ENCODE measurements at regions of chr9 and their contacts with region 1.

Region 1: DNA sequence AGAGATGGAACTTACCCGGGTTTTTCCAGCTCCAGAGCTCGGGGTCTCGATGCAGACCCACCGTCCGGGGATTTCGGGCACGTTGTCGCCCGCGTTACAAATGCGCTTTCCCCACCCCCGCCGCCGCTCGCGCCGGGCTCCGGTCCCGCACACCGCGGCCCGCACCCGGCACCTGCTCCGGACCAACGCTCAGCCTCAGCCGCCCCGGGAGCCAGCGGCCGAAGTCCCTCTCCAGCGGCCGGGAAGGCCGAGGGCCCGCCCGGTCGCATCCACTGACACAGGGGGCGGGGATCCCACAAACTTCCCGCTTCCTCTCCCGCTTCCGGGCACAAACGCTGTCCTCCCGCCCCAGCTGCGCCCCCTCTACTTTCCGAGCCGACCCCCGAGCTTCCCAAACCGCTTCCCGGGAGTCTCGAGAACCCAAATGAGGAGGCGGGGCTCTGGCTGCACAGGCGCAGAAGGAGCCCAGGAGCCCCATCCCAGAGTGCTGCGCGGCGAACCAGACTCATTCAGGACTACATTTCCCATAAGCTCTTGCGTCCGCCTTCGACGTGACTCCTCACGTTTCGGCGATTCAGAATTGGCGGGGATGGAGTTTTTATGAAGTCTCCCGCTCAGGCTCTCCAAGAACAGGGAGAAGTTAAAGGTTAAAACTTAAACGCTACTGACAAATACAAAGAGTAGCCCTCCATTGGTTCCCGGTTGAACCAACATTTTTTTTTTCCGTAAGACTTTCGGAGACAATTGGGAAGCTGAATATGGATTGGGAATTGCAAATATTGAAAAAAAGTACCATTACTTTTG is at the start of gene ZNF782:
- DNase-seq: peak; percentile 90 to 95 (median 94)
- ATAC-seq: peak; percentile 92
- H3K4me3 ChIP-seq: peak within 1 kb of the TSS; percentile 70
- H3K27ac ChIP-seq: peak within 1 kb of the TSS; percentile 49
- H3K4me1 ChIP-seq: peaks cover 15 to 33% of the 10 kb centered on the region in 2 experiments
- H3K27me3 ChIP-seq: no peaks in the 10 kb centered on the region
- CTCF ChIP-seq: no peak
- EP300 ChIP-seq: no peak
- POLR2A ChIP-seq: peak; percentile 77
- RAD21 ChIP-seq: peak in 1 of 2 experiments; percentile 9; a peak in 1 of 4 replicates
- polyA plus RNA-seq, gene ZNF782: 0.38 to 0.55 TPM

Region 2: DNA sequence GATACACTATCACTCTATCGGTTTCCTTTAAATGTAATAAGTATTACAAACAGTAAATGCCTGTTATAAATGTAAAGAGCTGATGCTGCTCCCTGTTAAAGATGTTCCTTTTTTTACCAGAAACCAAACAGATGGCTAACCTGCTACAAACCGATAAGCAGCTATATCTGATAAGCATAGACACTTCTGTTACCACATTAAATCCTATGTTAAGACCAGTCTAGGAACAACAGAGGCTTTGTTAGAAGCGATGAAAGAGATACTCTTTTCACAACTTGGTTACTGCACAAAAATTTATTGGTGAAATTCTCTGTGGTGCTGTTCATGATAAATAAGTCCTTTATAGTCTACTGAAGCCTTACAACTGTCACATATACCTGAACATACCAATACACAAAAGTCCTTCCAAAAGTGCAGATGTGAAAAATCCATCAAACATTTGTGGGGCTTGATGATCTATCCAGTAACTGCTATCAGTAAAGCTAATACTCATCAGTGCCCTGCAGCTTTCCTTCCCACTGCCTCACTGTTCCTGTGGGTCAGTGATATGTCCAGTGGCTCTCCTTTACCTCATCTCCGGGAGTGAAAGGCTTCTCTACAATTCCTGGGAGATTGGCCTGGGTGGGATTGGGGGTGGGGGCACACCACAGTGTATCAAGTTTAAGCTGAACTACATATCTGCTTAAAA is 173.3 kb before region 1 on chr9:
- CTCF ChIA-PET with region 1: no interaction called
- POLR2A ChIA-PET with region 1: no interaction called
- in situ Hi-C with region 1: no loop called
- intact Hi-C with region 1: loop called (anchors 5 kb)
- DNase-seq: peak; percentile 41 to 63 (median 50)
- ATAC-seq: peak; percentile 81
- H3K4me3 ChIP-seq: no peak overlapping the region
- H3K27ac ChIP-seq: peak overlapping the region; percentile 27
- H3K4me1 ChIP-seq: peaks cover 11 to 30% of the 10 kb centered on the region in 2 experiments
- H3K27me3 ChIP-seq: no peaks in the 10 kb centered on the region
- CTCF ChIP-seq: no peak
- EP300 ChIP-seq: peak; percentile 91
- POLR2A ChIP-seq: no peak
- RAD21 ChIP-seq: no peak; a peak in 1 of 4 replicates

Region 3: DNA sequence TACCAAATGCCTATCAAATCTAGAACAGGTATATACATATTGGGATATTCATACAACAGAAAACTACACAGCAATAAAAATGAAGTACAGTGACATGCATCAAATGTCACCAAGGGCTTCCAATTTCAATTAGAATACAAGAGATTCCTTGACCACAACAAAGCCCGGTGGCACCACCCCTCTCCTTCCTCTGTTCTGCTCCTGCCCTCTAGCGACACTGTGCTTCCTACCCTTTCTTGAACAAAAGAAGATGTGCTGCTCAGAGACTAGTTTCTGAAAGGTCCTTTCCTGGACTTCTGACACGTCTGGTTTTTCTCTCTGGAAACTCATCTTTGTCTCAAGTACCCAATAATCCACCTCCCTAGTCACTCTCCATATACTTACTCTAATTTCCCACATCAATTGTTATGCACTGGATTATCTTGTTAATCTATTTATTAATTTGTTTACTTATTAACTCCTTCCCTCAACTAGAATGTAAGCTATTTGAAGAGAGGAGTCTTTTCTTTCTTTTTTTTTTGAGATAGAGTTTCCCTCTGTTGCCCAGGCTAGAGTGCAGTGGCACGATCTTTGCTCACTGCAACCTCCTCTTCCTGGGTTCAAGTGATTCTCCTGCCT is 255.0 kb after region 1 on chr9:
- CTCF ChIA-PET with region 1: interaction called, 10 read pairs
- POLR2A ChIA-PET with region 1: no interaction called
- in situ Hi-C with region 1: no loop called
- intact Hi-C with region 1: loop called (anchors 1 kb)
- DNase-seq: peak; percentile 7 to 70 (median 23)
- ATAC-seq: peak; percentile 96
- H3K4me3 ChIP-seq: no peak overlapping the region
- H3K27ac ChIP-seq: no peak overlapping the region
- H3K4me1 ChIP-seq: no peaks in the 10 kb centered on the region
- H3K27me3 ChIP-seq: peaks cover 2 to 17% of the 10 kb centered on the region in 2 experiments; a peak in 2 of 5 replicates
- CTCF ChIP-seq: peak; percentile 69 to 86 (median 74)
- EP300 ChIP-seq: no peak
- POLR2A ChIP-seq: no peak
- RAD21 ChIP-seq: peak; percentile 85 to 92

Region 4: DNA sequence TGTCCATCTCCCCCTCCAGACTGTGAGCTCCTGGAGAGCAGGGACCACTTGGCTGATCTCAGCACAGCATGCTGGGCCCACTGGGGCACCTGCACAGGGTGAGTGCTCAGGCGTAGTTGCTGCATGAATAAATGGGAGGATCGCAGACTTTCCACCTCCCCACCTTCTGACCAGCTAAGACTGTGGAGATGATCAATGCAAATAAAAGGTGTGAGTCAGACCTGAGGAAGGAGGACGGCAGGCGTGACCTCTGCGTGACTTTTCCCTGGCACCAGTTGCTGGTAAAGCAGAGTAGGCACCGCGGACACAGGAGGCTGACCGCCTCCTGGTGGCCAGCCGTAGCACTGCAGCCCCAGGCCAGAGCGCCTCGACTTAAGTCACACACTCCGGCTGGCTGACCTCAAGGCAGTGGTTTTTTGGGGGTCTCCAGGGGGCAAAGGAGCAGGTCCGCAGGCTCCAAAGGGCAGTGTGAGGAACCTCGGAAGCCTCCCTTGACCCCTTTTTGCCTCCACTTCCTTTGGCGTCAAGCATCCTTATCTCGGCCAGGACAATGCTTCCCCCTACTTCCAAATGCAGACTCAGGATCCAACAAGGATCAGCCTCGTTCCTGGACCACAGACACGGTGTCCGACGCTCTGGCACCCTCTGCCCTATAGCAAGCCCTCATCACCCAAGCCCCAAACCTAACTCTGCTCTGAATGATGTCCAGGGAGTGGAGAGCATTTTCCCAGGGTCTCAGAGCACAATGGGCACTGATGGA is 544.9 kb after region 1 on chr9:
- CTCF ChIA-PET with region 1: interaction called, 11 read pairs
- POLR2A ChIA-PET with region 1: interaction called, 4 read pairs
- in situ Hi-C with region 1: no loop called
- intact Hi-C with region 1: loop called (anchors 5 kb)
- DNase-seq: peak; percentile 72 to 78 (median 76)
- ATAC-seq: peak; percentile 95
- H3K4me3 ChIP-seq: no peak overlapping the region
- H3K27ac ChIP-seq: no peak overlapping the region
- H3K4me1 ChIP-seq: no peaks in the 10 kb centered on the region
- H3K27me3 ChIP-seq: peaks cover 8 to 13% of the 10 kb centered on the region in 2 experiments
- CTCF ChIP-seq: peak; percentile 85 to 95 (median 87)
- EP300 ChIP-seq: no peak
- POLR2A ChIP-seq: no peak
- RAD21 ChIP-seq: peak; percentile 37 to 82

Region 5: DNA sequence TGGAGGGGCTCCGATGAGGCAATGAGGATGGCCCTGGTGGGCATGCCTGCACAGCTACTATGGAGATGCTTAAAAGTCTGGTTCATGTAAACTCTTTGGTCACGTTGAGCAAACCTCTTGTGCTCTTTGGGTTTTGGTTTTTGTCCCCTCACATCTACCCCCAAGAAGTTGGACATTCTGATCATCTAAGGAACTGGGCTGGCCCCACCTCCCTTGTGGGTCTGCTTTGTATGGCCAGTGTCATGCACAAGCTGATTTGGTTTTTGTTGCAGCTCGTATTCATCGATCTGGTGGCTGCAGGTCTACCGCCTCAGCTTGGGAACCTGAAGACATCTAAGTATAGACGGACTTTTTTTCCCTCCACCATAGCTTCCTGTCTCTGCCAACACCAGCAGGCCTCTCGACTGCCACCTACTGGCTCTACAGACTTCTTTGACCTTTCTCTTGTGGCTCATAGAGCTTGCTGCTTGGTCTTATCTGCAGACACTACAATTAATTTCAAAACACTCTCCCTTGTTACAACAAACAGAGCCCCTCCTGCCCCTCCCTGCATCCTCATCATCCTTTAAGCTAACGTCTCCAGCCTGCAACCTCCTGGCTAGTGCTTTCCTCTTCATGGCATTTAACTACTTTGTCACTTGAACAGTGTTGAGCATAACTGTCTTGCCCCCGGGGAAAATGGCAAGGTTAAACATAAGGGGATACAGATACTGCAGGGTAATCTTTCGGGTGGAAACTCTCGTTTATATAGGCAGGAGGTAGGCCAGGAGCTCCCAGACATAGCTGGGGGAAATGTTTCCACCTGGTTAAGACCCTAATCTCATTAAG is 744.4 kb after region 1 on chr9:
- CTCF ChIA-PET with region 1: interaction called, 3 read pairs
- POLR2A ChIA-PET with region 1: no interaction called
- in situ Hi-C with region 1: loop called (anchors 10 kb)
- intact Hi-C with region 1: loop called (anchors 5 kb)
- DNase-seq: peak; percentile 56 to 84 (median 63)
- ATAC-seq: peak; percentile 96
- H3K4me3 ChIP-seq: no peak overlapping the region
- H3K27ac ChIP-seq: no peak overlapping the region
- H3K4me1 ChIP-seq: peaks cover 0 to 6% of the 10 kb centered on the region in 2 experiments; a peak in 3 of 5 replicates
- H3K27me3 ChIP-seq: no peaks in the 10 kb centered on the region
- CTCF ChIP-seq: peak; percentile 80 to 90 (median 86)
- EP300 ChIP-seq: no peak
- POLR2A ChIP-seq: no peak
- RAD21 ChIP-seq: peak; percentile 70 to 83

Measured in K562 (cell line).